Psoas muscle (tissue), 8 donors: ENCODE measurements at regions of chr12 and their contacts with region 1.

Region 1: DNA sequence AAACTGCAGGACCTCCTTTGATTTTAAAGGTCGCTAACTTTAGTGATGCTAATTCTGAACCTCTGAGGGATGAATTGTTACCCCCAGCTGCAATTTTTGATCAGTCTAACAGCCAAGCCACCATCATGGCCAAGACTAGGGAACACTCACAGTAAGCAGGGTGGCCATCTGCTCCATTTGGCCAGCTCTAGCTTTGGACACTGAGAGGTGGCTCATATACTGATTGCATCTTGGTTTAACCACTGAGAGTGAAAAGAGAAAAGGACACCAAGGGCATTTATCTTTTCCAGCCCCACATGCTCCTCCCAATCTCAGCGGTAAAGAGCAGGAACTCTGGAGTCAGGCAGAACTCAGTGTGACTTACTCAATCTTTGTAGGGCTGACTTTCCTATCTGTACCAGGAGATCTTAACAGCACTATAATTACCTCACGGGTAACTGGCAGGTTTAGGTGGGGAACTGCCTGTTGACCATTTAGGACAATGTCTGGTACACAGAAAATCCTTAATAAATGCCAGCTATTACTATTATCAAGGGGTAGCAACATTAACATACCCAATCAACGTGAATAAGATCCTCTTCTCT is 6.2 kb downstream of the LPCAT3 start:
- DNase-seq: no peak
- ATAC-seq: peak; percentile 72 to 87 (median 82)
- H3K4me3 ChIP-seq: peak overlapping the region; percentile 23
- H3K27ac ChIP-seq: peak overlapping the region; percentile 84
- H3K4me1 ChIP-seq: peaks cover 77% of the 10 kb centered on the region
- H3K27me3 ChIP-seq: no peaks in the 10 kb centered on the region
- CTCF ChIP-seq: no peak

Region 2: GRCh38 chr12:6973986-6974615 is 38.0 kb before region 1 on chr12:
- intact Hi-C with region 1: loop called (anchors 2 to 5 kb)
- DNase-seq: no peak
- ATAC-seq: no peak
- H3K4me3 ChIP-seq: no peak overlapping the region
- H3K27ac ChIP-seq: no peak overlapping the region
- H3K4me1 ChIP-seq: peaks cover 24% of the 10 kb centered on the region
- H3K27me3 ChIP-seq: no peaks in the 10 kb centered on the region
- CTCF ChIP-seq: no peak